ENCODE measurements at regions of chr19 and their contacts with region 1.

Region 1: DNA sequence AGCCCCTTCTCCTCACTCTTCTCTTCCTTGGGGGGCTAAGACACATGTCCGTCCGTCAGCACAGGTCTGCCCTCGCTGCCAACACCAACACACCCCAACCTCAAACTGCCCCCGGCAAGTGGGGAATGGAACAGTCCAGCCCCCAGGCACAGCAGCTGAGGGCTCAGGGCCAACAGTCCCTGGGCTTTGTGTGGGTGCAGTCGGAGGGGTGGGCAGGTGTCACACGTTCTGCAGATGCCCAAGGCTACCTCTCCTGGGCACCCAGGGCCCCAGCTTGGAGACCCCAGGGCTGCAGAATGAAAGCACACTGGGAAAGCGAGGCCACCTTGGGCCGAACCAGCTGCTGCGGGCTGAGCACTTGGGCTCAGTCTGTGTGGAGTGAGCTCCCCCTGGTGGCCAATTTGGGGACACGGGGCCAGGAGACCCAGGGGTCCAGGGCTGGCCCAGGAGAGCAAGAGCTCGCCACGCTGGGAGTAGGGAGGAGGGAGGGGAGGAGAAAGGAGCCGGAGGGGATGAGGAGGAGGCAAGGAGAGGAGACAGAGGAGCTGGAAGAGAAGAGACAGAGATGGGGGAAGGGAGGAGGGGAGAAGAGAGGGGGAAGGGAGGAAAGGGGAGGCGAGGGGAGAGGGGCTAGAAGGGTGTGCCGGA is 14.0 kb upstream of the ATP8B3 start:
- DNase-seq: peak; percentile 85 to 93 (median 88)
- ATAC-seq: peak; percentile 91
- H3K4me3 ChIP-seq: peak overlapping the region; percentile 42
- H3K27ac ChIP-seq: peak overlapping the region; percentile 67
- H3K4me1 ChIP-seq: peaks cover 11 to 64% of the 10 kb centered on the region in 2 experiments
- H3K27me3 ChIP-seq: no peaks in the 10 kb centered on the region
- CTCF ChIP-seq: peak; percentile 80 to 95 (median 90)
- EP300 ChIP-seq: no peak
- POLR2A ChIP-seq: no peak
- RAD21 ChIP-seq: peak; percentile 77 to 78

Region 2: DNA sequence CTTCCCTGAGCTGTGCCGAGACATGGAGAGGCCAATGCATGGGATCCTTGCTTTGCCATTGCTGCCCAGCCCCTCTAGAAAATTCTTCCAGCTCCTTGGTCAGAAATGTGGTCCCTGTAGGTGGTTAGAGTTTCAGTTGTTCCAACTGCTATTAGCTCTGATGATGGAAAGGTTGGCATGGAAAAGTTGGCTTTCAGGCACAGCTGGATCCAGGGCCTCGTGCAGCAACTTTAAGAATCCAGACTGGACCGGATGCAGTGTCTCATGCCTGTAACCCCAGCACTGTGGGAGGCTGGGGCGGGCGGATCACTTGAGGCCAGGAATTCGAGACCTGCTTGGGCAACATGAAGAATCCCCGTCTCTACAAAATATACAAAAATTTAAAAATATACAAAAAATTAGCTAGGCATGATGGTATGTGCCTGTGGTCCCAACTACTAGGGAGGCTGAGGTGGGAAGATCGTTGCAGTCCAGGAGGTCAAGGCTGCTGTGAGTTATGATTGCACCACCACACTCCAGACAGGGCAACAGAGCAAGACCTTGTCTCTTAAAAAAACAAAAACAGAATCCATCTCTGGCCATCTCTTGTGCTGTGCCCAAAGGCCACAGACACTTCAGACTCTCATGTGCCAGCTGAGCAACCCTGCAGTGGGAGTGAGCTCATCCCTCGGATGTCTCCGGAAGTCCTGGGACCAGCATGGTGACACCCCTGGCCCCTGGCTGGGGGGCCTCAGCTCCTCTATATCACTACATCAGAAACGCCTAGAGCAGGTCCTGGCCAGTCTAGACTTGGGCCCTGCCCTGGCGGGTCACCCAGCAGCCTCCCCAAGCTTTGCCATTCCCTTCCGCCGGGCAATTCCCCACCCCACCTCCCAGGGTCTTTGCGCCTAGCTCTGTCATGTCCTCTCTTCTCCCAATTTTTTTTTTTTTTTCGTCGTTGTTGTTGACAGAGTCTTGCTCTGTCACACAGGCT is 274.7 kb before region 1 on chr19:
- CTCF ChIA-PET with region 1: interaction called, 11 read pairs
- POLR2A ChIA-PET with region 1: no interaction called
- in situ Hi-C with region 1: no loop called
- intact Hi-C with region 1: no loop called
- DNase-seq: no peak
- ATAC-seq: no peak
- H3K4me3 ChIP-seq: no peak overlapping the region
- H3K27ac ChIP-seq: no peak overlapping the region
- H3K4me1 ChIP-seq: peaks cover 3 to 29% of the 10 kb centered on the region in 2 experiments; a peak in 3 of 5 replicates
- H3K27me3 ChIP-seq: no peaks in the 10 kb centered on the region; a peak in 1 of 5 replicates
- CTCF ChIP-seq: no peak
- EP300 ChIP-seq: no peak
- POLR2A ChIP-seq: no peak
- RAD21 ChIP-seq: no peak

Region 3: GRCh38 chr19:1774999-1775772 is 50.8 kb before region 1 on chr19:
- CTCF ChIA-PET with region 1: interaction called, 3 read pairs
- POLR2A ChIA-PET with region 1: no interaction called
- in situ Hi-C with region 1: no loop called
- intact Hi-C with region 1: loop called (anchors 1 kb)
- DNase-seq: peak; percentile 84 to 89 (median 86)
- ATAC-seq: peak; percentile 98
- H3K4me3 ChIP-seq: peak overlapping the region; percentile 25
- H3K27ac ChIP-seq: no peak overlapping the region
- H3K4me1 ChIP-seq: peaks cover 0 to 26% of the 10 kb centered on the region in 2 experiments; a peak in 3 of 5 replicates
- H3K27me3 ChIP-seq: peaks cover 0 to 19% of the 10 kb centered on the region in 2 experiments; a peak in 1 of 5 replicates
- CTCF ChIP-seq: peak; percentile 77 to 97 (median 90)
- EP300 ChIP-seq: no peak
- POLR2A ChIP-seq: no peak
- RAD21 ChIP-seq: peak; percentile 30 to 81; a peak in 3 of 4 replicates

Region 4: DNA sequence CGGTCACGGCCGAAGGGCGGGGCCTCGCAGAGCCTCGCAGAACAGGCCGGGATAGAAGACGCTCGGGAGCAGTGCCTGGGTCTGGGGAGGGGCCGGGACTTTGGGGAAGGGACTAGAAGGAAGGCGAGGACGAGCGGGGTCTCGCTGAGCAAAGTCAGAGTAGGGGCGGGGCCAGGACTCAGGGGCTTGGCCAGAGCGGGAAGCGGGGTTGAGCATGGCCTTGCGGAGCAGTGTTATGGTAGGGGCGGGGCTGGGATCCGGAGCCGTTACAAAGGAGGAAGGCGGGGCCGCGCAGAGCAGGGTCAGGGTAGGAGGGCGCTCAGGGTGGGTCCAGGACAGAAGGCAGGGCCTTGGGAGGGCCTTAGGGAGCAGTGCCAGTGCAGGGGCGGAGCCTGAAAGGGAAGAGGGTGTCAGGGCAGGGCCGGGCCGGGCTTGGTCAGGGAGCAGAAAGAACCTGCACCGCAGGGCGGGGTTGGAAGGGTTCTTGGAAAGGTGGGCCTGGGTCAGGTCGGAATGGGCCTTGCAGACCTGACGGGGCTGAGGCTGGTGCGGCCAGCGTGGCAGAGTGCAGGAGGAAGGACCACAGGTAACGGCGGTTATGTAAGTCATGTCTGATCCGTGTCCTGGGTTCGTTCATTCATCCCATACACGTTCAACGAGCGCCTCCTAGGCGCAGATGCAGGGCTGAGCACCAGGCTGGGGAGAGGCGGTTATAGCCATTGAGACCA is 13.4 kb before region 1 on chr19:
- CTCF ChIA-PET with region 1: no interaction called
- POLR2A ChIA-PET with region 1: interaction called, 7 read pairs
- in situ Hi-C with region 1: no loop called
- intact Hi-C with region 1: loop called (anchors 2 kb)
- DNase-seq: peak; percentile 90 to 97 (median 92)
- ATAC-seq: peak; percentile 95
- H3K4me3 ChIP-seq: peak overlapping the region; percentile 75
- H3K27ac ChIP-seq: peak overlapping the region; percentile 92
- H3K4me1 ChIP-seq: peaks cover 8 to 73% of the 10 kb centered on the region in 2 experiments; a peak in 3 of 5 replicates
- H3K27me3 ChIP-seq: no peaks in the 10 kb centered on the region
- CTCF ChIP-seq: peak; percentile 84 to 94 (median 87)
- EP300 ChIP-seq: no peak
- POLR2A ChIP-seq: peak; percentile 83
- RAD21 ChIP-seq: peak; percentile 55 to 83

Region 5: DNA sequence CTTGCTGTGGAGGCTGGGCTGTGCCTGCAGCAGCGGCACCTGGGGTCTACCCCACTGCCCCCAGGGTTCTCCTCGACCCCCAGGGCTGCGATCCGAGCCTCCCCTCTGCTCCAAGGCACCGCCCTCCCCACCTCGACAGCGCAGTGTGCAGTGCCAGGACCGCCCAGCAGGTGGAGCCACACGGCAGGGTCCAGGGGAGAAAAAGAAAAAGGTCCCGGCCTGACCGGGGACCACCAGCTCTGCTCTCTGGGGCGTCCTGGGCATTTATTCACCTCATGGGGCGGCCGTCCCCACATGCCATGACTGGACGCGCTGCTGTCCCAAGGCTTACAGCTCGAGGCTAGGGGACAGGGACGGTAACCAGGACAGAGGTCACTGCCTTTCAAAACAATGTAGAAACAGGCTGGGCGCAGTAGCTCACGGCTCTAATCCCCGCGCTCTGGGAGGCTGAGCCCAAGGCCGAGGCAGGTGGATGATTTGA is 11.6 kb after region 1 on chr19:
- CTCF ChIA-PET with region 1: interaction called, 3 read pairs
- POLR2A ChIA-PET with region 1: interaction called, 27 read pairs
- in situ Hi-C with region 1: no loop called
- intact Hi-C with region 1: no loop called
- DNase-seq: peak; percentile 68 to 83 (median 78)
- ATAC-seq: peak; percentile 71
- H3K4me3 ChIP-seq: peak overlapping the region; percentile 27
- H3K27ac ChIP-seq: peak overlapping the region; percentile 72
- H3K4me1 ChIP-seq: peaks cover 55 to 95% of the 10 kb centered on the region in 2 experiments
- H3K27me3 ChIP-seq: no peaks in the 10 kb centered on the region
- CTCF ChIP-seq: peak; percentile 86 to 95 (median 87)
- EP300 ChIP-seq: no peak
- POLR2A ChIP-seq: 0 out of 2 replicates have a peak, but pooled peaks have one; percentile 1
- RAD21 ChIP-seq: peak; percentile 62 to 74

Measured in K562 (cell line).